ENCODE measurements at regions of chr11 and their contacts with region 1.

Region 1: GRCh38 chr11:122159173-122159721 is 43.2 kb upstream of the BLID start:
- DNase-seq: no peak
- H3K4me3 ChIP-seq: peak overlapping the region; percentile 32 to 62
- H3K27ac ChIP-seq: peak overlapping the region; percentile 80 to 94
- H3K4me1 ChIP-seq: peaks cover 11 to 38% of the 10 kb centered on the region in 2 donors
- H3K27me3 ChIP-seq: no peaks in the 10 kb centered on the region
- CTCF ChIP-seq: no peak

Region 2: GRCh38 chr11:122179961-122180834 is 21.0 kb after region 1 on chr11:
- intact Hi-C with region 1: loop called (anchors 2 kb)
- DNase-seq: peak; percentile 32 to 87
- H3K4me3 ChIP-seq: peak overlapping the region in 1 of 2 donors; percentile 47
- H3K27ac ChIP-seq: peak overlapping the region; percentile 81 to 83
- H3K4me1 ChIP-seq: peaks cover 6 to 21% of the 10 kb centered on the region in 2 donors
- H3K27me3 ChIP-seq: no peaks in the 10 kb centered on the region
- CTCF ChIP-seq: no peak